ENCODE measurements at regions of chr14 and their contacts with region 1.

Region 1: GRCh38 chr14:102039157-102039556 is 47.7 kb downstream of the HSP90AA1 start:
- DNase-seq: no peak
- H3K4me3 ChIP-seq: no peak overlapping the region
- CTCF ChIP-seq: no peak

Region 2: GRCh38 chr14:101899263-101899662 is 139.9 kb before region 1 on chr14:
- in situ Hi-C with region 1: no loop called
- DNase-seq: no peak
- H3K4me3 ChIP-seq: no peak overlapping the region
- CTCF ChIP-seq: no peak

Region 3: DNA sequence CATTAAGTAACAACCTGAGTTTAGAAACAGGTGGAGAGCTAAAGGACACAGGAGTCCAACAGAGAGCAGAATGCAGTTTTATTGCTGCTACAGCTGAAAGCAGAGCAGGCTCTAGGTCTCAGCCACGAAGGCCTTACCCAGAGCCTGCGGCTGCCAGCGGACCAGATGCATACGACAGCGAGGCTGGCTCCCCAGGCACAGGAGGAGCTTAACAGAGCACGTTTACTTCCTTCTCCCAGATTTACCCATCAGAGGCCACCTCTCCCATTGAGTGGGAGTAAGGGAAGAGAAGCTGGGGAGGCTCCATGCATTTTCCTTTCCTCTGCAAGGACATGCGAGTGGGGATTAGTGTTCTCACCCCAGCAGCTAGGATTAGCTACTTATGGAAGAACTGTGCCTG is 52.2 kb before region 1 on chr14:
- in situ Hi-C with region 1: loop called (anchors 5 kb)
- DNase-seq: no peak
- H3K4me3 ChIP-seq: no peak overlapping the region
- CTCF ChIP-seq: no peak